ENCODE measurements at regions of chr3 and their contacts with region 1.

Region 1: GRCh38 chr3:68764554-68764953 is 167.8 kb downstream of the TAFA4 start:
- DNase-seq: no peak
- H3K4me3 ChIP-seq: no peak overlapping the region
- H3K27ac ChIP-seq: no peak overlapping the region
- H3K4me1 ChIP-seq: no peaks in the 10 kb centered on the region
- H3K27me3 ChIP-seq: no peaks in the 10 kb centered on the region
- CTCF ChIP-seq: no peak
- EP300 ChIP-seq: no peak
- POLR2A ChIP-seq: no peak

Region 2: DNA sequence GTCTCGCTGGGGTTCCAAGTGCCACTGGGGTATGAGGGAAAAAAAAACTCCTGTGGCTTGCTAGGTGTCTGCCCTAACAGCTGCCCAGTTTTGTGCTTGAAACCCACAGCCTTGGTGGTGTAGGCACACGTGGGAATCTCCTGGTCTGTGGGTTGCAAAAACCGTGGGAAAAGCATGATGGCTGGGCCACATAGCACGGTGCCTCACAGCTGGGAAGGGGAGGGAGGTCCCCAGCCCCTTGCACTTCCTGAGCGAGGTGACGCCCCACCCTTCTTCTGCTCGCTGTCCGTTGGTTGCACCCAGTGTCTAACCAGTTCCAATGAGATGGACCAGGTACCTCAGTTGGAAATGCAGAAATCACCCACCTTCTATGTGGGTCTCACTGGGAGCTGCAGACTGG is 1622.1 kb before region 1 on chr3:
- intact Hi-C with region 1: loop called in 1 of 4 experiments (anchors 5 kb)
- DNase-seq: no peak
- H3K4me3 ChIP-seq: no peak overlapping the region
- H3K27ac ChIP-seq: no peak overlapping the region
- H3K4me1 ChIP-seq: no peaks in the 10 kb centered on the region
- H3K27me3 ChIP-seq: no peaks in the 10 kb centered on the region
- CTCF ChIP-seq: no peak
- EP300 ChIP-seq: no peak
- POLR2A ChIP-seq: no peak

Region 3: DNA sequence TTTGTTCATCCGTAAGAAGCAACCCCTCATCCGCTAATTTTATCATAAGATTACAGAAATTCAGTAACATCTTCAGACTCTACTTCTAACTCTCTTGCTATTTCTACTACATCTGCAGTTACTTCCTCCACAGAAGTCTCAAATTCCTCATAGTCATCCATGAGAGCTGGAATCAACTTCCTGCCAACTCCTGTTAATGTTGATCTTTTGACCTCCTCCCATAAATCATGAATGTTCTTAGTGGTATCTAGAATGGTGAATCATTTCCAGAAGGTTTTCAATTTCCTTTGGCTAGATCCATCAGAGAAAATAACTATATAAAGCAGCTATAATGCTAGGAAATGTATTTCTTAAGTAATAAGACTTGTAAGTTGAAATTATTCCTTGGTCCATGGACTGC is 52.7 kb after region 1 on chr3:
- intact Hi-C with region 1: no loop called
- DNase-seq: no peak
- H3K4me3 ChIP-seq: no peak overlapping the region
- H3K27ac ChIP-seq: no peak overlapping the region
- H3K4me1 ChIP-seq: no peaks in the 10 kb centered on the region
- H3K27me3 ChIP-seq: no peaks in the 10 kb centered on the region
- CTCF ChIP-seq: no peak
- EP300 ChIP-seq: no peak
- POLR2A ChIP-seq: no peak

Region 4: GRCh38 chr3:68832680-68833079 is 68.1 kb after region 1 on chr3:
- intact Hi-C with region 1: loop called in 1 of 4 experiments (anchors 2 kb)
- DNase-seq: no peak
- H3K4me3 ChIP-seq: no peak overlapping the region
- H3K27ac ChIP-seq: no peak overlapping the region
- H3K4me1 ChIP-seq: no peaks in the 10 kb centered on the region
- H3K27me3 ChIP-seq: no peaks in the 10 kb centered on the region
- CTCF ChIP-seq: no peak
- EP300 ChIP-seq: no peak
- POLR2A ChIP-seq: no peak

Region 5: DNA sequence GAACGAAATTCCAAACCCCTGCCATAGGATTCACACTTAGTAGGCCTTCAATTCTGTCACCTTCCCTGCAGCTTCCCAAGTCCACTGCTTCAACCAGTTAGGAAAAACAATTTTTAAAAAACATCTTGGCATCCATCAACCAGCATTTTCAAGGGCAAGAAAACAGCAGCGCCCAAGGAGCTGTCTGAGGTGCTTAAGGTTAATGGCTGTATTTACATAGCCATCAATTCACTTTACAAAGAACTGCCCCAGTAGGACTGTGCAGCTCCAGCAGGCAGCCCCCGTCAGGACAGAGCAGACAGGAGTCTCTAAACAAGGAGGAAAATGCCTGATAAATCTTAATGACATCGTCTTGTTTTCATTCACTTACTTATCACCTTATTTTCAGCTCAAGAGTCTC is 154.4 kb after region 1 on chr3:
- intact Hi-C with region 1: no loop called
- DNase-seq: no peak
- H3K4me3 ChIP-seq: no peak overlapping the region
- H3K27ac ChIP-seq: no peak overlapping the region
- H3K4me1 ChIP-seq: no peaks in the 10 kb centered on the region
- H3K27me3 ChIP-seq: no peaks in the 10 kb centered on the region
- CTCF ChIP-seq: no peak
- EP300 ChIP-seq: no peak
- POLR2A ChIP-seq: no peak

Region 6: GRCh38 chr3:69200384-69201068 is 436.0 kb after region 1 on chr3:
- intact Hi-C with region 1: no loop called
- DNase-seq: peak in 3 of 5 donors; percentile 21 to 41 (median 37)
- H3K4me3 ChIP-seq: peak overlapping the region; percentile 15
- H3K27ac ChIP-seq: peak overlapping the region in 1 of 2 donors; percentile 11
- H3K4me1 ChIP-seq: no peaks in the 10 kb centered on the region
- H3K27me3 ChIP-seq: no peaks in the 10 kb centered on the region
- CTCF ChIP-seq: no peak
- EP300 ChIP-seq: no peak
- POLR2A ChIP-seq: no peak